ENCODE measurements at regions of chr6 and their contacts with region 1.

Region 1: DNA sequence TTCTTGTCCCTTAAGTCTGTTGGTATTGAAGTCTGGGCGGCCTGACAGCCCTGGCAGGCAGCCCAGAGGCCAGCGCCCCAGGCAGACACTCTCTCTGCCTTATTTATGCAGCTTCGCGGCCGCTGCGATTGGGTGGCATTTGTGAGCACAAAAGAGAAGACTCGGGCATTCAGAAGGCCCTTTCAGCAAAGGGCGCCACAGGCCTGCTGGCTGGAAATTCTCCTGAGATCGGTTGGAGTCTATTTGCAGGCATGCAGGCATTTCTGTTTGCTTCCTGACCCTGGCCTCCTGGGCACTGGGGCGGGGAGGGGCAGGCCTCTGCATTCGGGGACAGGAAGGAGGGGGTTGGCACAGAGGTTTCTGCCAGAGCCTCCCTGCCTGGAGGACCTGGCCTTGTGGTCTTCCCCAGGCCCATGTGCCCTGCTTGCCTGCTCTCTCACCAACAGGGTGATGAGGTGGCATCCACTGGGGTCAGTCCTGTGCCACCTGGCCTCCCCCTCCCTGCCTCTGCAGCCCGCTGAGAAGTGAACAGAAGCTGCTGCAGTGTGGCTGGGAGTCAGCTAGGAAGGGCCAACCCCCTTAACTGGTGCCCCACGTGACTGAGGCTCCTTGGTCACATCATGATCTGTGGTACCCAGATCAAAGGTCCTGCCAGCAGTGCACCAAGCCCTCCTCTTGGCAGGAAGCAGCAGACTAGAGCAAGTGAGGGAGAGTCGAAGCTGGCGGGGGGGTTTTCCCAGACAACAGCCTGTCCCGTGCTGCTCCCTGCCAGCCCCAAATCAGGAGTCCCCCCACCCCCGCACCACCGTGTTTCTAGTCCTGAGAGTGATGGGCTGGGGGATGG is 16.6 kb upstream of the CCDC167 start:
- DNase-seq: peak; percentile 92 to 99 (median 94)
- H3K4me3 ChIP-seq: peak overlapping the region; percentile 49 to 70
- H3K4me3 Mint-ChIP-seq: peak overlapping the region; percentile 84 to 95 (median 92)
- H3K27ac ChIP-seq: peak overlapping the region; percentile 99
- H3K27ac Mint-ChIP-seq: peak overlapping the region; percentile 97 to 100 (median 100)
- H3K4me1 ChIP-seq: peaks cover 91% of the 10 kb centered on the region
- H3K4me1 Mint-ChIP-seq: peaks cover 50 to 94% (median 79%) of the 10 kb centered on the region in 4 donors
- H3K27me3 ChIP-seq: no peaks in the 10 kb centered on the region
- H3K27me3 Mint-ChIP-seq: no peaks in the 10 kb centered on the region

Region 2: DNA sequence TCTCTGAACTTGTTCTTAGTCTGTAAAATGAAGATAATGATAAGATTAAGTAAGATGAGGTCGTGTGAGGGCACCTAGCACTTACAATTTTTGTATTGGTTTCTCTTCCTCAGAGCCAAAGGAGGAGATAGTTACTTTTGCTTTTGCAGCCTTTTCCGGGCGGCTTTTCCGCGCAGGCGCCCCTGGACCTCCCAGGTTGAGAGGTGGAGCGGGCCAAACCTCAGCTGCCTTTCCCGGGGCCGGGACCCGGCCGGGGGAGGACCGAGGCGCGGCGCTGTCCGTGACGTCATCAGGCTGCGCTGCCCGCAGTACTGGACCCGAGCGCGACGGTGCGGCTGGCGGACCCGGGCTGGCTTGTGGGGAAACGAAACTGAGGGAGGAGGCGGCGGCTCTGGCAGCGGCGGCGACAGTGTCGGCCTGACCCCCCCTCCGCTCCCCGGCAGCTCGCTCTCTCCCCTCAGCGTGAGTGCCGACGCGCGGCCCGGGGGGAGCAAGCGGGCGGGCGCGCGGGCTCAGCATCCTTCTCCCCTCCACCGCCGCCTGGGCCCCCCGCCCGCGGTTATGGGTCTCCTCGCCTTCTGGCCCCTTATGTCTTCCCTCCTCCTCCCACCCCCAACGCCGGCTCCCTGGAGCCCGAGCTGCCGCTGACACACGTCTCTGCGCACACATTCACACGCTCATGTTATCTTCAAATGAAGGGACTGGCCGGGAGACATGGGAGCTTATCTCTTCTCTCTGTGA is 83.2 kb before region 1 on chr6 and contains the start of gene CMTR1:
- CTCF ChIA-PET with region 1: interaction called, 3 read pairs
- POLR2A ChIA-PET with region 1: interaction called, 22 read pairs
- intact Hi-C with region 1: loop called (anchors 1 kb)
- DNase-seq: peak; percentile 97 to 98 (median 97)
- H3K4me3 ChIP-seq: peak within 1 kb of the TSS; percentile 61 to 95
- H3K4me3 Mint-ChIP-seq: peak within 1 kb of the TSS; percentile 92 to 98 (median 93)
- H3K27ac ChIP-seq: peak within 1 kb of the TSS; percentile 96
- H3K27ac Mint-ChIP-seq: peak within 1 kb of the TSS; percentile 95 to 100 (median 97)
- H3K4me1 ChIP-seq: peaks cover 32% of the 10 kb centered on the region
- H3K4me1 Mint-ChIP-seq: peaks cover 24 to 52% (median 40%) of the 10 kb centered on the region in 4 donors
- H3K27me3 ChIP-seq: no peaks in the 10 kb centered on the region
- H3K27me3 Mint-ChIP-seq: peaks cover 3 to 5% of the 10 kb centered on the region in 2 donors
- total RNA-seq, gene CMTR1: 75.0 to 79.1 TPM

Region 3: GRCh38 chr6:37449984-37450383 is 66.3 kb before region 1 on chr6:
- CTCF ChIA-PET with region 1: no interaction called
- POLR2A ChIA-PET with region 1: no interaction called
- intact Hi-C with region 1: no loop called
- DNase-seq: no peak
- H3K4me3 ChIP-seq: no peak overlapping the region
- H3K4me3 Mint-ChIP-seq: no peak overlapping the region
- H3K27ac ChIP-seq: no peak overlapping the region
- H3K27ac Mint-ChIP-seq: no peak overlapping the region
- H3K4me1 ChIP-seq: no peaks in the 10 kb centered on the region
- H3K4me1 Mint-ChIP-seq: peaks cover 2 to 8% (median 3%) of the 10 kb centered on the region in 4 donors
- H3K27me3 ChIP-seq: no peaks in the 10 kb centered on the region
- H3K27me3 Mint-ChIP-seq: no peaks in the 10 kb centered on the region

Region 4: GRCh38 chr6:37489660-37490361 is 26.5 kb before region 1 on chr6:
- CTCF ChIA-PET with region 1: interaction called, 54 read pairs
- POLR2A ChIA-PET with region 1: interaction called, 977 read pairs
- intact Hi-C with region 1: loop called (anchors 1 kb)
- DNase-seq: peak in 3 of 5 donors; percentile 34 to 60 (median 35)
- H3K4me3 ChIP-seq: no peak overlapping the region
- H3K4me3 Mint-ChIP-seq: peak overlapping the region in 7 of 8 donors; percentile 33 to 81 (median 71)
- H3K27ac ChIP-seq: peak overlapping the region; percentile 52
- H3K27ac Mint-ChIP-seq: peak overlapping the region; percentile 92 to 99 (median 97)
- H3K4me1 ChIP-seq: peaks cover 76% of the 10 kb centered on the region
- H3K4me1 Mint-ChIP-seq: peaks cover 40 to 86% (median 72%) of the 10 kb centered on the region in 4 donors
- H3K27me3 ChIP-seq: no peaks in the 10 kb centered on the region
- H3K27me3 Mint-ChIP-seq: no peaks in the 10 kb centered on the region

Region 5: DNA sequence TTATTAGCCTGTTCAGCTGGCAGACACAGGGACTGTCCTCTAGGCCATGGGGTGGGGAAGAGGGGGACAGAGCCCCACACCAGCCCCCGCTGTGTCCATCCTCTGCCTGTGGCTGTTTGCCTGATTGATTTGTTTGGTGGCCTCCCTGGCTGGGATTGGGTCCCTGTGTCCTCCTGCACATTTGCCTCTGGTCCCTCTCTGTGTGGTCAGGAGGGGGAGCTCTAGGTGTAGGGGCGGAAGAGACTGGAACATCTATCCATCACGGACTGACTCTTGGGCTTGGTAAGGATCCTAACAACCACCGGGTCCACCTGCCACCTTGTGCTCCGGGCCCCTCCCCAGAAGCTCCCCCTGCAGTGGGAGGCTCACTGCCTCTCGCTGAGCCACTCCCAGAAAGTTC is 21.8 kb after region 1 on chr6:
- CTCF ChIA-PET with region 1: interaction called, 5 read pairs
- POLR2A ChIA-PET with region 1: interaction called, 61 read pairs
- intact Hi-C with region 1: no loop called
- DNase-seq: no peak
- H3K4me3 ChIP-seq: no peak overlapping the region
- H3K4me3 Mint-ChIP-seq: no peak overlapping the region
- H3K27ac ChIP-seq: no peak overlapping the region
- H3K27ac Mint-ChIP-seq: peak overlapping the region in 5 of 7 donors; percentile 50 to 92 (median 71)
- H3K4me1 ChIP-seq: peaks cover 10% of the 10 kb centered on the region
- H3K4me1 Mint-ChIP-seq: peaks cover 3 to 27% (median 21%) of the 10 kb centered on the region in 4 donors
- H3K27me3 ChIP-seq: no peaks in the 10 kb centered on the region
- H3K27me3 Mint-ChIP-seq: no peaks in the 10 kb centered on the region

Region 6: GRCh38 chr6:37554480-37554819 is 38.2 kb after region 1 on chr6:
- CTCF ChIA-PET with region 1: interaction called, 6 read pairs
- POLR2A ChIA-PET with region 1: interaction called, 18 read pairs
- intact Hi-C with region 1: no loop called
- DNase-seq: no peak
- H3K4me3 ChIP-seq: no peak overlapping the region
- H3K4me3 Mint-ChIP-seq: no peak overlapping the region
- H3K27ac ChIP-seq: no peak overlapping the region
- H3K27ac Mint-ChIP-seq: peak overlapping the region in 2 of 7 donors; percentile 21 to 54
- H3K4me1 ChIP-seq: peaks cover 18% of the 10 kb centered on the region
- H3K4me1 Mint-ChIP-seq: peaks cover 18 to 40% (median 30%) of the 10 kb centered on the region in 4 donors
- H3K27me3 ChIP-seq: no peaks in the 10 kb centered on the region
- H3K27me3 Mint-ChIP-seq: no peaks in the 10 kb centered on the region

Region 7: DNA sequence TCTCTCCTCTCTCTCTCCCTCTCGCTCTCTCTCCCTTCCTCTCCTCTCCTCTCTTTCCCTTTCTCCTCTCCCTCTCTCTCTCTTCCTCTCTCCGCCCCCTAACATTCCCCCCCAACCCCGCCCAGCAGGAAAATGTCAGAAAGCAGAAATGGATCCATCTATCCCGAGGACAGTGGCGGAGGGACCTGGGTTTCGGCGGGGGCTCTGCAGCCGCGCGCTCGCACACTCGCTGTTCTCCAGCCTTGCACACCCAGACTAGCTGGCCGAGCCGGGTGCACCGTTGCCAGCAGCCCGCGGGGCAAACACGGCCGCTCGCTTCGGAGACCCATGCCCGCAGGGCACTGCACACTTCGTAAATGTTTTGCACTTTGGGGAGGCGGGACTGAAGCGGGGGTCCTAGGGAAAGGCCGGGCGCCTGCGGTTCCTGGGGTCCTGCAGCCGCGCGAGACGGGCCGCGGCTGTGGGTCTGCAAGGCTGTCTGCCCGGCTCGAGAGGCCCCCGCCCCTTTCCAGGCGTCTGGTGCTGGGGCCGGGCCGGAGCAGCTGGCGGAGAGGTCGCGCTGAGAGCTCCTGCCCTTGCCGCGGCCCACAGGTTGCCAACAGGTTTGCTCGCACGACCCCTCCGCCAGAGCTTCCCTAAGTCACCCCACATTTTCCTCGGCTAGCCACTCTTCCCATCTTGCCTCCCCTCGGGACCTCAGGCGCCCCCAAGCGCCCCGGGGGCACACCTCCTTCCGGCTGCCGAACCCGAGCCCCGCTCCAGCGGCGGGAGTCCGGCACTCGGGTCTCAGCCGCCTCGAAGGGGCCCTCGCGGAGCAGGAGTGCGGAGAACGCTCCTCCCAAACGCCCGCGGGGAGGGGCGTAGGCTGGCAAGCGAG is 182.2 kb after region 1 on chr6:
- CTCF ChIA-PET with region 1: no interaction called
- POLR2A ChIA-PET with region 1: interaction called, 10 read pairs
- intact Hi-C with region 1: no loop called
- DNase-seq: peak; percentile 66 to 85 (median 74)
- H3K4me3 ChIP-seq: peak overlapping the region; percentile 47 to 60
- H3K4me3 Mint-ChIP-seq: peak overlapping the region; percentile 92 to 100 (median 100)
- H3K27ac ChIP-seq: peak overlapping the region; percentile 33
- H3K27ac Mint-ChIP-seq: peak overlapping the region; percentile 92 to 100 (median 98)
- H3K4me1 ChIP-seq: peaks cover 17% of the 10 kb centered on the region
- H3K4me1 Mint-ChIP-seq: peaks cover 17 to 52% (median 26%) of the 10 kb centered on the region in 4 donors
- H3K27me3 ChIP-seq: peaks cover 14% of the 10 kb centered on the region
- H3K27me3 Mint-ChIP-seq: peaks cover 0 to 6% of the 10 kb centered on the region in 2 donors

Measured in CD4-positive, alpha-beta memory T cell (primary cell).